Caco-2 (cell line): ENCODE measurements at regions of chr20 and their contacts with region 1.

Region 1: GRCh38 chr20:49982346-49983122 is at the start of gene SNAI1:
- DNase-seq: peak; percentile 96 to 97
- H3K4me3 ChIP-seq: peak within 1 kb of the TSS; percentile 69
- H3K4me3 Mint-ChIP-seq: peak within 1 kb of the TSS; percentile 73
- H3K27ac Mint-ChIP-seq: peak within 1 kb of the TSS; percentile 73
- H3K4me1 ChIP-seq: peaks cover 43% of the 10 kb centered on the region
- H3K4me1 Mint-ChIP-seq: peaks cover 34% of the 10 kb centered on the region
- H3K27me3 ChIP-seq: no peaks in the 10 kb centered on the region
- H3K27me3 Mint-ChIP-seq: no peaks in the 10 kb centered on the region
- CTCF ChIP-seq: peak; percentile 71 to 98
- total RNA-seq, gene SNAI1: 8.9 and 10.9 TPM in 2 replicates

Region 2: DNA sequence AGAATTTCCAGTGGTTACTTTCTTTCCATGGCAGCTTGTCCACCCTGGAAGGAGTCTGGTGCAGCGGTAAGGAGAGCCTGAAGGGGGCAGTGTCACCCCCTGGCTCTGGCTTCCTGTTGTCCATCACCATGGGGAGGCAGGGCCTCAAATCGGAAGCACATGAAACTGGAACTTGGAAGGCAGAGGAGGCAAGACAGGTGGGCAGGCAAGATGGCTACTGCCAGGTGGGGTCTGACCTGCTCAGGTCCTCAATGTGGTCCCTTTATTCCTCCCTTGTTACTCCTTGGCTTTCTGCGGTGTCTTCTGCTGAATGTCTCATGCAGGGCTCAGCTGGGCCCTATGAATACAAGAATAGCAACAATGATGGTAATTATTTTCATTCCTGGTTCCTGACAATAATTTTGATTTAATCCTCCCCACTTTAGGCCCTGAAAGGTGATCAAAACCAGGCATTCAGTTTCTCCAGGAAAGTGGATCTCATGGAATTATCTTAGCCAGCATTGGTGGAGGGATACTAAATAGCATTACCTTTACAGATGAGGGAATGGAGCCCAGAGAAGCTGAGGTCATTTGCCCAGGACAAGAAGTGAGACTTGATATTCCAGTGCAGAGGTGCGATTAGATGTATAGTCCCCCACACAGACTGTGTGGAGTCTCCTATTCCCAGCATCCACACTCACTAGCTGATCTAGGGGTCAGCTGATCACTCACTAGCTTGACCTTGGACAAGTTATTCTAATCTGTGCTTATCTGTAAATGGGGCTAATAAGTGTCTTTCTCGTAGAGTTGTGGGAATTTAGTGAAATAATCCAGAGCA is 17.4 kb before region 1 on chr20:
- CTCF ChIA-PET with region 1: interaction called, 18 read pairs
- POLR2A ChIA-PET with region 1: no interaction called
- intact Hi-C with region 1: no loop called
- DNase-seq: peak; percentile 82 to 85
- H3K4me3 ChIP-seq: no peak overlapping the region
- H3K4me3 Mint-ChIP-seq: no peak overlapping the region
- H3K27ac Mint-ChIP-seq: peak overlapping the region; percentile 49
- H3K4me1 ChIP-seq: peaks cover 47% of the 10 kb centered on the region
- H3K4me1 Mint-ChIP-seq: peaks cover 29% of the 10 kb centered on the region
- H3K27me3 ChIP-seq: no peaks in the 10 kb centered on the region
- H3K27me3 Mint-ChIP-seq: no peaks in the 10 kb centered on the region
- CTCF ChIP-seq: peak; percentile 90 to 92

Region 3: DNA sequence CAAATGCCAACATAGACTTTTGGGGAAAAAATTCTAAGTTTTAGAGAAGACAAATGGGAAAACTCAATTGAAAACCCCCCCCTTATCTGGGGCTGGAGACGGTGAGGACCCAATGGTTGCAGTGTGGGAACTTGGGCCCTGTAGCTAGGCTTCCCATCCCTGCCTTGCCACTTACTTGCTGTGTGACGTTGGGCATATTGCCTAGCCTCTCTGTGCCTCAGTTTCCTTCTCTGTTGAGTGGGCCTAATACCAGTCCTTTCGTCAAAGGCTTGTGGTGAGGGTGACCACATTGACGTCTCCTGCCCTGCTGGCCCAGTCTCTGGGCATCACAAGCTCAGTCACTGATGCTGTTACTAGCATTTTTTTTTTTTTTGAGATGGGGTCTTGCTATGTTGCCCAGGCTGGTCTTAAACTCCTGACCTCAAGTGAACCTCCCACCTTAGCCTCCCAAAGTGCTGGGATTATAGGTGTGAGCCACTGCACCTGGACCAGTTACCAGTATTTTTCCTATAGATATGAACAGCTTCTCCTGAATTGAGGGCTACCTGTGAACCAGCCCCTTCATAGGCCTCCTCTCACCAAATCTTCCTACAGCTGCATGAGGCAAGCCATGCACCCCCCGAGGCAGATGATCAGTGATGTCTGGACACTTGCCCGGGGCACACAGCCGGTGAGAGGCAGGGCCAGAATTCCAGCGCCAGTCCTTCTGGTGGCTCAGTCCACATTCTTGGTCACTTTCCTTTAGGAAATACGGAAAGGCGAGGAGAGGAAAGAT is 79.4 kb after region 1 on chr20:
- CTCF ChIA-PET with region 1: interaction called, 433 read pairs
- POLR2A ChIA-PET with region 1: no interaction called
- intact Hi-C with region 1: no loop called
- DNase-seq: no peak
- H3K4me3 ChIP-seq: no peak overlapping the region
- H3K4me3 Mint-ChIP-seq: no peak overlapping the region
- H3K27ac Mint-ChIP-seq: no peak overlapping the region
- H3K4me1 ChIP-seq: no peaks in the 10 kb centered on the region
- H3K4me1 Mint-ChIP-seq: peaks cover 6% of the 10 kb centered on the region
- H3K27me3 ChIP-seq: no peaks in the 10 kb centered on the region
- H3K27me3 Mint-ChIP-seq: no peaks in the 10 kb centered on the region
- CTCF ChIP-seq: no peak

Region 4: GRCh38 chr20:50085452-50086365 is 103.2 kb after region 1 on chr20:
- CTCF ChIA-PET with region 1: interaction called, 36 read pairs
- POLR2A ChIA-PET with region 1: no interaction called
- intact Hi-C with region 1: loop called (anchors 5 kb)
- DNase-seq: peak; percentile 74 to 80
- H3K4me3 ChIP-seq: no peak overlapping the region
- H3K4me3 Mint-ChIP-seq: no peak overlapping the region
- H3K27ac Mint-ChIP-seq: no peak overlapping the region
- H3K4me1 ChIP-seq: peaks cover 8% of the 10 kb centered on the region; the same call in 1 of the 2 replicates
- H3K4me1 Mint-ChIP-seq: peaks cover 24% of the 10 kb centered on the region
- H3K27me3 ChIP-seq: no peaks in the 10 kb centered on the region
- H3K27me3 Mint-ChIP-seq: no peaks in the 10 kb centered on the region
- CTCF ChIP-seq: peak; percentile 95 to 96

Region 5: GRCh38 chr20:50120897-50121693 is 138.6 kb after region 1 on chr20:
- CTCF ChIA-PET with region 1: interaction called, 24 read pairs
- POLR2A ChIA-PET with region 1: no interaction called
- intact Hi-C with region 1: no loop called
- DNase-seq: peak; percentile 86 to 88
- H3K4me3 ChIP-seq: no peak overlapping the region
- H3K4me3 Mint-ChIP-seq: no peak overlapping the region
- H3K27ac Mint-ChIP-seq: peak overlapping the region; percentile 27
- H3K4me1 ChIP-seq: peaks cover 15% of the 10 kb centered on the region
- H3K4me1 Mint-ChIP-seq: peaks cover 18% of the 10 kb centered on the region
- H3K27me3 ChIP-seq: no peaks in the 10 kb centered on the region
- H3K27me3 Mint-ChIP-seq: no peaks in the 10 kb centered on the region
- CTCF ChIP-seq: peak; percentile 98 to 99

Region 6: GRCh38 chr20:50172347-50173013 is 189.9 kb after region 1 on chr20:
- CTCF ChIA-PET with region 1: interaction called, 17 read pairs
- POLR2A ChIA-PET with region 1: no interaction called
- intact Hi-C with region 1: loop called (anchors 1 kb)
- DNase-seq: peak; percentile 99
- H3K4me3 ChIP-seq: peak overlapping the region; percentile 47
- H3K4me3 Mint-ChIP-seq: peak overlapping the region; percentile 70
- H3K27ac Mint-ChIP-seq: peak overlapping the region; percentile 48
- H3K4me1 ChIP-seq: peaks cover 18% of the 10 kb centered on the region
- H3K4me1 Mint-ChIP-seq: peaks cover 13% of the 10 kb centered on the region
- H3K27me3 ChIP-seq: no peaks in the 10 kb centered on the region
- H3K27me3 Mint-ChIP-seq: no peaks in the 10 kb centered on the region
- CTCF ChIP-seq: peak in 1 of 2 experiments; percentile 0

Region 7: DNA sequence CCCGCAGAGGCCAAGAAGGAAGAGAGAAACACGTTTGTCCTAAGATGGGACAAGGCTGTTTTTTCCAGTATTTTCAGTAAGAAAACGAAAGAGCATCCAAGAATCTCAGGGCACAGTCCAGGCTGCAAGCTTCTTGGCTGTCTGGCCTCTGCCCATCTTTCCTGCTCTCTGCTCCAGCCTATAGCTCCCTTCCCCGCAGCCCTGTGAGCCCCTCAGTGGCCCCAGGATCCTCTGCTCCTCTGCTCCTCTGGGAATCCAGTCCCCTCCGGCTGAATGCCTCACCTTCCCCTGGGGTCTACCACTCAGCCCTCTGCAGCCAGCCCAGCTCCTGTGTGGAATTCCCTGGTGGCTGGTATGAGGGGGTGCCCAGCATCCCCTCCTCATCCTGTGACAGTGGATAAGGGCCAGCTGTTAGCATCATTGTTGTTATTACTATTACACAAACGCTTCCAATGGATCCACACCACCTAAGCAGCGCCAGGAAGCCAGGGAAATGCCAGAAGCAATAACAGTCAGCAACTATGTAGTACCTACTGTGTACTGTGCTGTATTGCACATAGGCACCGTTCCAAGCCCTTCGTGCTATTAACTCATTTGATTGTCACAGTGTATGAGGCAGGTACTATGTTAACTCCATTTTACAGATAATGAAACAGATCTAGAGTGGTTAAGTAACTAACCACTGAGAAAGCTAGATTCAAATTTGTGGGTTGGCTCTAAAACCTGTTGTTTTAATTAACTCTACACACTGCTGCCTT is 467.4 kb after region 1 on chr20:
- CTCF ChIA-PET with region 1: no interaction called
- POLR2A ChIA-PET with region 1: no interaction called
- intact Hi-C with region 1: no loop called
- DNase-seq: no peak
- H3K4me3 ChIP-seq: no peak overlapping the region
- H3K4me3 Mint-ChIP-seq: no peak overlapping the region
- H3K27ac Mint-ChIP-seq: peak overlapping the region; percentile 30
- H3K4me1 ChIP-seq: peaks cover 65% of the 10 kb centered on the region
- H3K4me1 Mint-ChIP-seq: peaks cover 71% of the 10 kb centered on the region
- H3K27me3 ChIP-seq: no peaks in the 10 kb centered on the region
- H3K27me3 Mint-ChIP-seq: no peaks in the 10 kb centered on the region
- CTCF ChIP-seq: no peak